MCF 10A (cell line): ENCODE measurements at regions of chr1 and their contacts with region 1.

Region 1: GRCh38 chr1:200639790-200640669 is 19.5 kb upstream of the KIF14 start:
- DNase-seq: peak; percentile 95
- H3K4me3 Mint-ChIP-seq: peak overlapping the region; percentile 4
- H3K27ac Mint-ChIP-seq: peak overlapping the region; percentile 55
- H3K4me1 Mint-ChIP-seq: peaks cover 20% of the 10 kb centered on the region
- H3K27me3 Mint-ChIP-seq: no peaks in the 10 kb centered on the region
- CTCF ChIP-seq: no peak

Region 2: DNA sequence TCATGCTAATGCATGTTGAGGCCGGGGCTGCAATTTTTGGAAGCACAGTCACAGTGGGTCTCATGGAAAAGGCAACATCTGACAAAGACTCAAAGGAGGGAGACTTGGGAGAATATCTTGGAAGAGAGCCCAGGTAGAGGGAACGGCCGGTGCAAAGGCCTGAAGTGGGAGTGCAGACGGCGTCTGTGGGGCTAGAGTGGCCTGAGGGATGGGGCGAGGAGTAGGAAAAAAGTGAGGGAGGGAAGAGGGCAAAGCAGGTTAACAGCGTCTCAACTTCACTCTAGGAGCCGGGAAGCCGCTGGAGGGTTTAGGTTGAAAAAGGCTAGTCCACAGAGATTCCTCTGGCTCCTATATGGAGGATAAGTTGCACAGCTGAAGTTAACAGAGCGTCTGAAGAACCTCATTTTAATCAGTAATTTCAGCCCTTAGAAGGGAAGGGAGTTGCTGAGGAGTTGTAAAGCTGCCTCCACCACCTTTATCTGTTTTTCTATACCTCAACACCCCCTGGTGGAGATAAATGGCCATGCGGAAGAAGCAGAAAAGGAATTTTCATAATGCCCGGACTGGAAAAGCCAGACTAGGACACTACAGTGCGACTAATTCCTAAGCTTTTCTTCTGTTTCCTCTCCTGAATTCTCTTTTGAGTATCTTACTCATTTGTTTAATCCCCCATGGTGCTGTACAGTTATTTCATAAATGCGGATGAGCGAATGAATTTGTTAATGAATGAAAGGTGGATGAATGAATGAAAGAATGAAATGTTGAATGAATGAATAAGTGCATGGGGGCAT is 151.5 kb before region 1 on chr1:
- CTCF ChIA-PET with region 1: no interaction called
- POLR2A ChIA-PET with region 1: no interaction called
- intact Hi-C with region 1: no loop called
- DNase-seq: peak; percentile 91
- H3K4me3 Mint-ChIP-seq: no peak overlapping the region
- H3K27ac Mint-ChIP-seq: no peak overlapping the region
- H3K4me1 Mint-ChIP-seq: peaks cover 22% of the 10 kb centered on the region
- H3K27me3 Mint-ChIP-seq: no peaks in the 10 kb centered on the region
- CTCF ChIP-seq: peak; percentile 95

Region 3: GRCh38 chr1:200628223-200628881 is 11.7 kb before region 1 on chr1:
- CTCF ChIA-PET with region 1: interaction called, 21 read pairs
- POLR2A ChIA-PET with region 1: interaction called, 28 read pairs
- intact Hi-C with region 1: no loop called
- DNase-seq: no peak
- H3K4me3 Mint-ChIP-seq: no peak overlapping the region
- H3K27ac Mint-ChIP-seq: no peak overlapping the region
- H3K4me1 Mint-ChIP-seq: peaks cover 10% of the 10 kb centered on the region
- H3K27me3 Mint-ChIP-seq: no peaks in the 10 kb centered on the region
- CTCF ChIP-seq: no peak

Region 4: GRCh38 chr1:200654660-200655059 is 14.6 kb after region 1 on chr1:
- CTCF ChIA-PET with region 1: interaction called, 6 read pairs
- POLR2A ChIA-PET with region 1: interaction called, 51 read pairs
- intact Hi-C with region 1: no loop called
- DNase-seq: peak; percentile 25
- H3K4me3 Mint-ChIP-seq: peak overlapping the region; percentile 1
- H3K27ac Mint-ChIP-seq: peak overlapping the region; percentile 33
- H3K4me1 Mint-ChIP-seq: peaks cover 44% of the 10 kb centered on the region
- H3K27me3 Mint-ChIP-seq: no peaks in the 10 kb centered on the region
- CTCF ChIP-seq: no peak

Region 5: DNA sequence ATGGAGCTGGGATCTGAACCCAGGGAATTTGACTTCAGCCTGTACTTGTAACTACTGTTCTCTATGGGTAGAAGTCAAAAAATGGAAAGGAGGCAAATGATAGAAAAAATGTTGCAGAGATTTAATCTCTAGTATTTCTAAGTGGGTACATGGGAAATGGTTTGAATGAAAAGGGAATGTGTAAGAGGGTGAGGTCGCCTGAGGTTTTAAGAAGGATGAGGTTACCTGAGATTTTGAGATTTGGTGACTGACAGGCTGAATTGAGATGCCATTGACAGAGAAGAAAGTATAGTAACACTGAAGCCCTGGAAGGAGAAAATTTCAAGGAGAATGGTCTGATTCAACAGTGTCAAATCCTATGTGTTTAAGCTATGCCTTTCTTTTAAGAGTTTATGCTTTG is 104.1 kb after region 1 on chr1:
- CTCF ChIA-PET with region 1: interaction called, 5 read pairs
- POLR2A ChIA-PET with region 1: interaction called, 28 read pairs
- intact Hi-C with region 1: no loop called
- DNase-seq: no peak
- H3K4me3 Mint-ChIP-seq: peak overlapping the region; percentile 30
- H3K27ac Mint-ChIP-seq: peak overlapping the region; percentile 14
- H3K4me1 Mint-ChIP-seq: peaks cover 50% of the 10 kb centered on the region
- H3K27me3 Mint-ChIP-seq: no peaks in the 10 kb centered on the region
- CTCF ChIP-seq: no peak

Region 6: GRCh38 chr1:200751717-200752116 is 111.7 kb after region 1 on chr1:
- CTCF ChIA-PET with region 1: no interaction called
- POLR2A ChIA-PET with region 1: interaction called, 12 read pairs
- intact Hi-C with region 1: no loop called
- DNase-seq: no peak
- H3K4me3 Mint-ChIP-seq: no peak overlapping the region
- H3K27ac Mint-ChIP-seq: no peak overlapping the region
- H3K4me1 Mint-ChIP-seq: peaks cover 52% of the 10 kb centered on the region
- H3K27me3 Mint-ChIP-seq: no peaks in the 10 kb centered on the region
- CTCF ChIP-seq: no peak

Region 7: GRCh38 chr1:200780545-200781369 is 140.7 kb after region 1 on chr1:
- CTCF ChIA-PET with region 1: interaction called, 3 read pairs
- POLR2A ChIA-PET with region 1: interaction called, 10 read pairs
- intact Hi-C with region 1: no loop called
- DNase-seq: peak; percentile 38
- H3K4me3 Mint-ChIP-seq: peak overlapping the region; percentile 70
- H3K27ac Mint-ChIP-seq: peak overlapping the region; percentile 88
- H3K4me1 Mint-ChIP-seq: peaks cover 41% of the 10 kb centered on the region
- H3K27me3 Mint-ChIP-seq: no peaks in the 10 kb centered on the region
- CTCF ChIP-seq: no peak